Activated T-helper 1 cell treated with anti-CD3 and anti-CD28 coated beads, Interleukin-12 subunit alpha, Interleukin-12 subunit beta, Interleukin-2, Interleukin-4 antibody, amounts not matched to agents 30 ng/mL and 10 ng/mL and 1 ng/mL, durations not matched to agents 14 hours and 24 hours and 36 hours (primary cell): ENCODE measurements at regions of chr3 and their contacts with region 1.

Region 1: DNA sequence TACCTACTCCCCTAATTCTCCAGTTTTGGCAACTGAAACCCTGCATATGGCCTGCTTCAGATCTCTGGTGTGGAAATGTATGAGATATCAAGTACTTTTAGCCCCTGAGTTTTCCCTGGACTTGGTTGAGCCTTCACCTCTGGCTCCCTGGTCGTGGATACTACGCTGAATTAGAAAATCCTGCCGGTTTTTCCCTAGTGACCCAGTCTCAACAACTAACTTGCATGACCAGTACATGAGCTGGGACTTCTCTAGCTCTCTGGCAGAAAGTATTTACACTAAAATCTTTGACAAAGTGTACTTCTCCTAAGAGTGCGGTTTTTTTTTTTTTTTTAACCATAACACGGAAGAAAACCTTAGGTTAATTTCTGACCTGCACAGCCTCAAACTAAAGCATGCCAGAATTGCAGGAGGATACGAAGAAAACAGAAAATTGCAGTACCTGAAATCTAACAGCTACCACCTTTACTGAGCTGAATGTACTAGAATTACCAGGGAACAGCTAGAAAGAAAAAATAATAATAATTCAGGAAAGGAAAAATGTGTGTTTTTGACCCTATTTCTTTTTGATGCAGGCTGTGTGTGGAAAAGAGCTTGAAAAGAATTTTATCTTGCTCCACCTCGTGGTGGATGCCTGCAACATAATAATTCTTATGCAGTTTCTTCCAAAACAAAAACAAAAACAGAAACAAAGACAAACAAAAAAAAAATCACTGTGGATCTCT is 165.6 kb downstream of the GMNC start:
- DNase-seq: no peak
- H3K4me3 Mint-ChIP-seq: no peak overlapping the region
- H3K27ac Mint-ChIP-seq: no peak overlapping the region
- H3K4me1 Mint-ChIP-seq: peaks cover 19% of the 10 kb centered on the region
- H3K27me3 Mint-ChIP-seq: peaks cover 13% of the 10 kb centered on the region

Region 2: GRCh38 chr3:189833996-189834395 is 862.9 kb before region 1 on chr3:
- intact Hi-C with region 1: no loop called
- DNase-seq: no peak
- H3K4me3 Mint-ChIP-seq: no peak overlapping the region
- H3K27ac Mint-ChIP-seq: no peak overlapping the region
- H3K4me1 Mint-ChIP-seq: no peaks in the 10 kb centered on the region
- H3K27me3 Mint-ChIP-seq: peaks cover 2% of the 10 kb centered on the region

Region 3: DNA sequence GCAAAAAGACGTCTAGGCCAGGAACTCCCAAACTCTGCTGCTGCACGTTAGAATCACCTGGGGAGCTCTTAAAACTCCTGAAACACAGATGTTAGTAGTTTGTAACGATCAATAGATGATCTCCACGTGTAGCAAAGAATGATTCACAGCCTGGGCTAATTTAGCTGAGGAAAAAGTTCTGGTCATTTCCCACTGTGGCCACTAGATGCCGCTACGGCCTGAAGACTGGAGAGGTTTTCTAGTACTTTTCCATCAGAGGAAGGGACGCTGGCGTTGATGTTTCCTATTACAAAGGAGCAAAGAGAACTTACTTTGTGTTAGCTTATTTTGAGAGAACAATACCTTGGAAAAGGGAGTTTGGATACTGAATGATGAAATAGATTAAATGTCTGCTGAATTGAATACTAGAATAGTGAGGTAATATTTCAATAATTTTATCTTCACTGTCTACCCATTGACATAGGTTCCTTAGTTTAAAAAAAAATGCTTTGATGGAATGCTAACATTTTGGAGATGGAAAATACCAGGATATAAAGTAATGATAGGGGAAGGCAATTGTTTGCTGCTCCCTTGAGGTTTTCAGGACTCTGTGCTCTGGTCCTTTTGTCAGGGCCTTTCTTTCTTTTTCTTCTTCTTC is 735.3 kb before region 1 on chr3:
- intact Hi-C with region 1: loop called (anchors 2 kb)
- DNase-seq: peak; percentile 49
- H3K4me3 Mint-ChIP-seq: no peak overlapping the region
- H3K27ac Mint-ChIP-seq: no peak overlapping the region
- H3K4me1 Mint-ChIP-seq: peaks cover 7% of the 10 kb centered on the region
- H3K27me3 Mint-ChIP-seq: peaks cover 2% of the 10 kb centered on the region

Region 4: DNA sequence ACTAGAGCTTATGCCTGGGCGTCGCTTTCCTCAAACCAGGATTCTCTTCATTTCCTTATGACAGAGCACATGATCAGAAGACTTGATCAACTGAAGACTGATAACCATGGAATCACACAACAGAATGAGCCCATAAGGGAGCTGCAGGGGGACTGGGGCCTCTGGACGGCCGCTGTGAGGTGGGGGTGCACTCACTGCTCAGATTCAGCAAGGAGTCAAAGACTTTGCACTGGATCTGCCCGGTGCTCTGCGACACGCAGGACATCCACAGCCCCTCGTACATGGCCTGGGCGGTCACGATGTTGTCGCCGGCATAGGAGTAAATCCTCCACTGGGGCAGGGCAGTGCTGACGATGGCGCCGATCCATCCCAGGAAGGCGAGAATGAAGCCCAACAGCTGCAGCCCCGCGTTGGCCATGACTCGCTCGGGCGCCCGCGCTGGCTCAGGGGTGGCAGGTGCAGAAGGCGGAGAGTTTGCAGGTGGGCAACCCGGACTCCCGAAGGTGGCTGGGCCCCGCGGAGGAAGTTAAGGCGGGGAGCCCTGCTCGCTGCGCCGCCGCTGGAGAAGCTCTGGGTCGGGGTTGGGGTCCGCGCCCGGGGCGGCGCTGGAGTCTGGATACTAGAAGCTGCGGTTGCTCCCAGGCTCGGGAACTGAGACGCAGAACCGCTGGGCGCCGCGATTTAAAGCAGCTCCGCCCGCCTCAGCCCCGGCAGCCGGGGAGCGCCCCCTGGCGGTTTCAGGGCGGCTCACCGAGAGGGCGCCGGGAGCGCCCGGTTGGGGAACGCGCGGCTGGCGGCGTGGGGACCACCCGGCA is 374.9 kb before region 1 on chr3 and contains the start of gene CLDN1:
- intact Hi-C with region 1: loop called (anchors 10 kb)
- DNase-seq: peak; percentile 61
- H3K4me3 Mint-ChIP-seq: peak within 1 kb of the TSS; percentile 78
- H3K27ac Mint-ChIP-seq: no peak within 1 kb of the TSS
- H3K4me1 Mint-ChIP-seq: peaks cover 40% of the 10 kb centered on the region
- H3K27me3 Mint-ChIP-seq: peaks cover 21% of the 10 kb centered on the region
- total RNA-seq, gene CLDN1: 0.22 and 0.34 TPM in 2 replicates

Region 5: GRCh38 chr3:190424478-190425439 is 272.2 kb before region 1 on chr3:
- intact Hi-C with region 1: loop called (anchors 5 kb)
- DNase-seq: no peak
- H3K4me3 Mint-ChIP-seq: no peak overlapping the region
- H3K27ac Mint-ChIP-seq: no peak overlapping the region
- H3K4me1 Mint-ChIP-seq: no peaks in the 10 kb centered on the region
- H3K27me3 Mint-ChIP-seq: peaks cover 6% of the 10 kb centered on the region

Region 6: GRCh38 chr3:190491533-190492054 is 205.3 kb before region 1 on chr3:
- intact Hi-C with region 1: loop called (anchors 1 kb)
- DNase-seq: no peak
- H3K4me3 Mint-ChIP-seq: no peak overlapping the region
- H3K27ac Mint-ChIP-seq: peak overlapping the region; percentile 7
- H3K4me1 Mint-ChIP-seq: peaks cover 27% of the 10 kb centered on the region
- H3K27me3 Mint-ChIP-seq: peaks cover 67% of the 10 kb centered on the region

Region 7: GRCh38 chr3:190566043-190566933 is 130.7 kb before region 1 on chr3:
- intact Hi-C with region 1: loop called (anchors 2 kb)
- DNase-seq: peak; percentile 67
- H3K4me3 Mint-ChIP-seq: peak overlapping the region; percentile 42
- H3K27ac Mint-ChIP-seq: peak overlapping the region; percentile 97
- H3K4me1 Mint-ChIP-seq: peaks cover 83% of the 10 kb centered on the region
- H3K27me3 Mint-ChIP-seq: no peaks in the 10 kb centered on the region

Region 8: GRCh38 chr3:190617185-190617584 is 79.8 kb before region 1 on chr3:
- intact Hi-C with region 1: loop called (anchors 5 kb)
- DNase-seq: peak; percentile 58
- H3K4me3 Mint-ChIP-seq: peak overlapping the region; percentile 61
- H3K27ac Mint-ChIP-seq: peak overlapping the region; percentile 97
- H3K4me1 Mint-ChIP-seq: peaks cover 91% of the 10 kb centered on the region
- H3K27me3 Mint-ChIP-seq: no peaks in the 10 kb centered on the region

Region 9: DNA sequence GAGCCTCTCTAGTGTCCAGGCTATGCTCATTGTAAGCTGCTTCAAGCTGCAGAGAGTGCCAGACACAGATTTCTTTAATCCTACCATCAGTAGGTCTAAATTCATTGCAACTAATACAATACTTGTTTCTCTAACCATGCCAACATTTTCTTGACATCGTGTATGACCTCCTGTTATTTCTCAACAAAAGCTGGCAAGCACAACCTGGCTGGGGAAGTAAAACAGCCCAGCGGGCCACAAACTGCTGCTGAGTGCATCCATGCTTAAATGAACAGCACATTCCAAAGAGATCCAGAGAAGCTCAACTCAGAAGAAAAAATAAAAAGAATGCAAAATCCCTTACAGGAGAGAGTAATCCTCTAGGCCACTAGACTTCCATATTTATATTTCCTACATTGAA is 129.1 kb after region 1 on chr3:
- intact Hi-C with region 1: no loop called
- DNase-seq: no peak
- H3K4me3 Mint-ChIP-seq: no peak overlapping the region
- H3K27ac Mint-ChIP-seq: no peak overlapping the region
- H3K4me1 Mint-ChIP-seq: no peaks in the 10 kb centered on the region
- H3K27me3 Mint-ChIP-seq: no peaks in the 10 kb centered on the region